ENCODE measurements at regions of chr16 and their contacts with region 1.

Region 1: DNA sequence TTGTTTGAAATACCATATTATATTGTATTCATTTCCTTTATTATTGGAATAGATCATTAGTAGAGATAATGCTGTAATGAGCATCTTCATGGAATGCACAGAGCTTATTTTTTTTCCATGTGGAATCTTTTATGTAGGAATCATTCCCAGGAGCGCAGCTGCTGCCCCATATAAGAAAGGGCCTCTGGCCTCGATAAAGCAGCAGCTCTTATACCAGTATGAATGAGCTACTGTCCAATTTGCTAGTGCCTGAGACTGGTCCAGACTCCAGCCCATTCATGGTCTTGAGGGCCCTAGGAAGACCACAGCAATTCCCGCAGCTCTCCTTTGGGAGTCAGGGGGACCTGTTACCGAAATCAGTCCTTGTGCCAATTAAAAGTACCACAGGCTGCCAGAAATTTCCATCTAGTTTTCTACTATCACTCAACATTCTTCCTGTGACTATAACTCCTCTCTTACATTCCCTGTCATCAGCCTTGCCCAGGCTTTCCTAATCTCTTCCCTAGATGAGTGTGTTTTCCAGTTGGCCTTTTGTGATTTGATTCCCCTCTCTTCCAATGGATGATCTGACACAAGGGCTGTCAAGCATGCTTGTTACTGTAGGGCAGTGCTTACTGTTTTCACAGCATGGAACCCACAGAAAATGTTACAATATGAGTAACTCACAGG is 1.9 kb downstream of the ZNF843 start:
- DNase-seq: no peak
- H3K4me3 ChIP-seq: no peak overlapping the region
- H3K4me3 Mint-ChIP-seq: no peak overlapping the region
- H3K27ac Mint-ChIP-seq: no peak overlapping the region
- H3K4me1 ChIP-seq: no peaks in the 10 kb centered on the region
- H3K4me1 Mint-ChIP-seq: no peaks in the 10 kb centered on the region
- H3K27me3 ChIP-seq: no peaks in the 10 kb centered on the region
- H3K27me3 Mint-ChIP-seq: no peaks in the 10 kb centered on the region
- CTCF ChIP-seq: no peak

Region 2: DNA sequence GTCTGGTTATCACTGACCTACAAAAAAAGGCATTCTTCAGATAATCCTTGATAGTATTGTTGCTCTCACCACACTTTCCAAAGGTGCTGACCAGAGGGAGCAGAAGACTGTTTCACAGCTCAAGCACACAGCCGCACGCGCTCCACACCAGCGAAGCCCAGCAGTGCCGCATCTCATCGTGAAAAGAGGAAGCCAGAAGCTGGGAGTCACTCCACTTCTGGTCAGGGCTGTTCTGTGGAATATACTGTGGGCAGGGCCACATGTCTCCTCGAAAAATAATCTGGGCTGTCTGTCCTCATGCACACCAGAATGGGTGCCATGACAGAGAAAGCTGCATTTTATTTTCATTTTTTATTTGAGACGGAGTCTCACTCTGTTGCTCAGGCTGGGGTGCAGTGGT is 283.5 kb before region 1 on chr16:
- CTCF ChIA-PET with region 1: no interaction called
- POLR2A ChIA-PET with region 1: no interaction called
- intact Hi-C with region 1: loop called (anchors 5 kb)
- DNase-seq: no peak
- H3K4me3 ChIP-seq: no peak overlapping the region
- H3K4me3 Mint-ChIP-seq: peak overlapping the region; percentile 37
- H3K27ac Mint-ChIP-seq: no peak overlapping the region
- H3K4me1 ChIP-seq: 0 out of 2 replicates have a peak, but pooled peaks cover 3% of the 10 kb centered on the region
- H3K4me1 Mint-ChIP-seq: no peaks in the 10 kb centered on the region
- H3K27me3 ChIP-seq: no peaks in the 10 kb centered on the region
- H3K27me3 Mint-ChIP-seq: no peaks in the 10 kb centered on the region
- CTCF ChIP-seq: no peak

Region 3: GRCh38 chr16:31202414-31203375 is 238.0 kb before region 1 on chr16 and contains the start of gene PYCARD:
- CTCF ChIA-PET with region 1: no interaction called
- POLR2A ChIA-PET with region 1: no interaction called
- intact Hi-C with region 1: loop called (anchors 5 kb)
- DNase-seq: no peak
- H3K4me3 ChIP-seq: peak within 1 kb of the TSS; percentile 18
- H3K4me3 Mint-ChIP-seq: peak within 1 kb of the TSS; percentile 37
- H3K27ac Mint-ChIP-seq: no peak within 1 kb of the TSS
- H3K4me1 ChIP-seq: no peaks in the 10 kb centered on the region; the same call in 1 of the 2 replicates
- H3K4me1 Mint-ChIP-seq: peaks cover 22% of the 10 kb centered on the region
- H3K27me3 ChIP-seq: no peaks in the 10 kb centered on the region
- H3K27me3 Mint-ChIP-seq: peaks cover 3% of the 10 kb centered on the region
- CTCF ChIP-seq: no peak
- total RNA-seq, gene PYCARD: 0.49 and 0.84 TPM in 2 replicates

Region 4: GRCh38 chr16:31298967-31299366 is 141.7 kb before region 1 on chr16:
- CTCF ChIA-PET with region 1: no interaction called
- POLR2A ChIA-PET with region 1: no interaction called
- intact Hi-C with region 1: loop called (anchors 10 kb)
- DNase-seq: no peak
- H3K4me3 ChIP-seq: no peak overlapping the region
- H3K4me3 Mint-ChIP-seq: no peak overlapping the region
- H3K27ac Mint-ChIP-seq: no peak overlapping the region
- H3K4me1 ChIP-seq: no peaks in the 10 kb centered on the region
- H3K4me1 Mint-ChIP-seq: no peaks in the 10 kb centered on the region
- H3K27me3 ChIP-seq: no peaks in the 10 kb centered on the region
- H3K27me3 Mint-ChIP-seq: peaks cover 12% of the 10 kb centered on the region
- CTCF ChIP-seq: peak in 1 of 2 experiments; percentile 45

Region 5: GRCh38 chr16:31386157-31386984 is 54.3 kb before region 1 on chr16:
- CTCF ChIA-PET with region 1: interaction called, 3 read pairs
- POLR2A ChIA-PET with region 1: no interaction called
- intact Hi-C with region 1: loop called (anchors 1 kb)
- DNase-seq: peak in 1 of 2 experiments; percentile 17
- H3K4me3 ChIP-seq: no peak overlapping the region
- H3K4me3 Mint-ChIP-seq: no peak overlapping the region
- H3K27ac Mint-ChIP-seq: peak overlapping the region; percentile 15
- H3K4me1 ChIP-seq: peaks cover 10% of the 10 kb centered on the region; the same call in 1 of the 2 replicates
- H3K4me1 Mint-ChIP-seq: no peaks in the 10 kb centered on the region
- H3K27me3 ChIP-seq: no peaks in the 10 kb centered on the region
- H3K27me3 Mint-ChIP-seq: peaks cover 6% of the 10 kb centered on the region
- CTCF ChIP-seq: no peak

Region 6: DNA sequence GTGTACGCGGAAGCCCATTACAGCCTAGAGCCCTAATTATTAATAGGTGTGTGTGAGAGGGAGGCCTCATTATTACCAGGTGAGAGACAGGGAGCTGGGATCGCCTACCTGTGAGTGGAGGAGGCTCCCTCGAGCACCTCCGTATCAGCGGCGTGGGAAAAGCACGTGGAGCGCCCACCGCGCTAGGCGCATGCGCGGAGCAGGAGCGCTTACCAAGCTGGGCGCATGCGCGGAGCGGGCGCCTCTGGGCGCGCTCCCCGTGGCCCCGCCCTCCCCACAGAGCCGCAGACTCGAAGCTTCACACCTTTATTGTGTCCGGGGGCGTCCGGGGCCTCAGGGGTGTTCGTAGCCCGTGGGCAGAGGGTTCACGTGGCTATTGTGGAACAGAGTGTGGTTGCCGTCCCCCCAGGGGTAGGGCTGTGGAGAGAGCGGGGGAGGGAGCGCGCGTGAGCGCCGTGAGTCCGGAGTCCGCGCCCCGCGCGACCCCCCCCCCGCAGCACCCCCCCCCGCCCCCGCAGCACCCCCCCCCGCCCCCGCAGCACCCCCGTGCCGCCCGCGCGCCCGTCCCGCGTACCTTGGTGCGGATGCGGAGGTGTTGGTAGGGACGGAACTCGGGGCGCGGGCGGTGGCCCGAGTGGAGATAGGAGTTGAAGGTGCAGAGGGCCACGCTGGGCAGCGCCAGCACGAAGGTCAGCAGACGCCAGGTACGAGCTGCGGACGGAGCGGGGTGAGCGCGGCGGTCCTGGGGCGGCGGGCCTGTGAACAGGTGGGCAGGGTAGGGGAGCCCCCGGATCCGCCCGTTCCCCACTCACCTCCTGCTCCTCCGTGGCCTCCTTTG is 13.0 kb before region 1 on chr16:
- CTCF ChIA-PET with region 1: no interaction called
- POLR2A ChIA-PET with region 1: no interaction called
- intact Hi-C with region 1: loop called (anchors 2 kb)
- DNase-seq: no peak
- H3K4me3 ChIP-seq: no peak overlapping the region
- H3K4me3 Mint-ChIP-seq: no peak overlapping the region
- H3K27ac Mint-ChIP-seq: no peak overlapping the region
- H3K4me1 ChIP-seq: no peaks in the 10 kb centered on the region
- H3K4me1 Mint-ChIP-seq: no peaks in the 10 kb centered on the region
- H3K27me3 ChIP-seq: no peaks in the 10 kb centered on the region
- H3K27me3 Mint-ChIP-seq: peaks cover 8% of the 10 kb centered on the region
- CTCF ChIP-seq: no peak

Region 7: GRCh38 chr16:31513126-31513525 is 72.5 kb after region 1 on chr16:
- CTCF ChIA-PET with region 1: no interaction called
- POLR2A ChIA-PET with region 1: no interaction called
- intact Hi-C with region 1: no loop called
- DNase-seq: no peak
- H3K4me3 ChIP-seq: no peak overlapping the region
- H3K4me3 Mint-ChIP-seq: no peak overlapping the region
- H3K27ac Mint-ChIP-seq: no peak overlapping the region
- H3K4me1 ChIP-seq: no peaks in the 10 kb centered on the region
- H3K4me1 Mint-ChIP-seq: peaks cover 8% of the 10 kb centered on the region
- H3K27me3 ChIP-seq: no peaks in the 10 kb centered on the region
- H3K27me3 Mint-ChIP-seq: no peaks in the 10 kb centered on the region
- CTCF ChIP-seq: no peak

Measured in Caco-2 (cell line).